ENCODE measurements at regions of chr9 and their contacts with region 1.

Region 1: GRCh38 chr9:92133949-92134604 is 18.9 kb upstream of the SPTLC1 start:
- DNase-seq: peak; percentile 73 to 84 (median 75)
- ATAC-seq: peak; percentile 77
- H3K4me3 ChIP-seq: no peak overlapping the region
- H3K27ac ChIP-seq: no peak overlapping the region
- H3K4me1 ChIP-seq: peaks cover 7% of the 10 kb centered on the region
- H3K27me3 ChIP-seq: no peaks in the 10 kb centered on the region
- CTCF ChIP-seq: peak; percentile 61 to 96 (median 78)
- POLR2A ChIP-seq: no peak

Region 2: GRCh38 chr9:91659529-91660495 is 474.3 kb before region 1 on chr9:
- intact Hi-C with region 1: no loop called
- DNase-seq: peak in 1 of 4 donors; percentile 27
- ATAC-seq: no peak
- H3K4me3 ChIP-seq: no peak overlapping the region
- H3K27ac ChIP-seq: no peak overlapping the region
- H3K4me1 ChIP-seq: no peaks in the 10 kb centered on the region
- H3K27me3 ChIP-seq: no peaks in the 10 kb centered on the region
- CTCF ChIP-seq: peak in 3 of 7 experiments; percentile 22 to 33 (median 29)
- POLR2A ChIP-seq: no peak

Region 3: DNA sequence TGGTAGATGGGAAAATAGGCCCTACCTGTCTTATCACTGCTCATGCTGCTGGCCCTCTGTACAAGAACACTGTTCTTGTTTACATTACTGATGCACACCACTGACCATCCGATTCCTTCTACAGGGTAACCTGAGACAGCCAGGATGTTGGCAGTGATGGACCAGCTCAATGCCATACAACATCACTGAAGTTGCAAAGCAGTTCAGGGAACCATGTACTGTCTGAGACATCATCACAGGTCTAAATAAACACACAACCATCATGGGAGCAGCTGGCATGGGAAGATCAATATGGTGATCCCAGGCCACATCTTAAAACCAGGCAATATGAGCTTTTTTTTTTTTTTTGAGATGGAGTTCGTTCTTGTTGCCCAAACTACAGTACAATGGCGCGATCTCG is 100.4 kb after region 1 on chr9:
- intact Hi-C with region 1: loop called (anchors 10 kb)
- DNase-seq: no peak
- ATAC-seq: no peak
- H3K4me3 ChIP-seq: no peak overlapping the region
- H3K27ac ChIP-seq: no peak overlapping the region
- H3K4me1 ChIP-seq: no peaks in the 10 kb centered on the region
- H3K27me3 ChIP-seq: no peaks in the 10 kb centered on the region
- CTCF ChIP-seq: no peak
- POLR2A ChIP-seq: no peak

Region 4: DNA sequence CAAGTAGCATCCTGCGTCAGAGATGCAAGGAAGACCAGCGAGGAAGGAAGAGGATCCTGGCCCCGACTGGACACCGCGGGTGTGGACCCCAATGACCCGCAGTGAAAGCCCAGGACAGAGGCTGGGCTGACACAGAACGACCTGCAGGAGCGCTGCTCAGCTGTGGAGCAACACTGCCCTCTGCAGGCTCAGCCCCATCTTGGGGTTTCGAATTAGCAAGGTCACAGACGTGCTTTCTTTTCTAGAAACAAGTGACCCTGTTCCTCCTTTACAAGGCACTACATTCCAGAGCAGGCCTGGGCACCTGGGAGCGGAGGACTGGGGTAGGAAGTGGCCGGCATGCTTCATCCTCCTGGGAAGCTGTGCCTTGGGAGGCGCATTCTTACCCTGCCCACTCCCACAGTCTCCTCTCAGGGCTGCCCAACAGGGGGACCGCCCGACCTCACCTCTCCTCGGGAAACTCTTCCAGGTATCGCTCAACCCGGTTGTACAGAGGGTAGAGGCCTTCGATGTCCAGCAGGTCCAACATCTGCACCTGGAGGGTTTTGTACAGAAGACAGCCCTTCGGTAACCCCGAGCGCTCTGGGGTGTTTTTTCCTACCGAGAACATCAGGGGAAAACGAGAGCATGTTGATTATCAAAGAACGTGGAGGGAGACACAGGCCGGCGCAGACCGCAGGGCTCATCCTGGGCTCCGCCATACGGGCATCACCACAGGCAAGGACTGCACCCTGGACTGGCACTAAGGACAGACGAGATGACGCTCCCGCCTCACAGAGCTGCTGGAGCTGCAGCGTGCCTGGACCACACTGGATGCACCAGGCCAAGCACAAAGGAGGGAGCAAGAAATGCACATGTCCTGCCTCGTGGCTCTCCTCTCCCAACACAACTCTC is 500.9 kb after region 1 on chr9:
- intact Hi-C with region 1: loop called (anchors 5 kb)
- DNase-seq: peak; percentile 67 to 79 (median 72)
- ATAC-seq: peak; percentile 81
- H3K4me3 ChIP-seq: no peak overlapping the region
- H3K27ac ChIP-seq: no peak overlapping the region
- H3K4me1 ChIP-seq: no peaks in the 10 kb centered on the region
- H3K27me3 ChIP-seq: no peaks in the 10 kb centered on the region
- CTCF ChIP-seq: peak; percentile 64 to 91 (median 84)
- POLR2A ChIP-seq: no peak

Region 5: GRCh38 chr9:92781923-92782322 is 647.8 kb after region 1 on chr9:
- intact Hi-C with region 1: loop called (anchors 10 kb)
- DNase-seq: no peak
- ATAC-seq: no peak
- H3K4me3 ChIP-seq: no peak overlapping the region
- H3K27ac ChIP-seq: no peak overlapping the region
- H3K4me1 ChIP-seq: no peaks in the 10 kb centered on the region
- H3K27me3 ChIP-seq: no peaks in the 10 kb centered on the region
- CTCF ChIP-seq: no peak
- POLR2A ChIP-seq: no peak

Measured in body of pancreas (tissue), 4 donors.